ENCODE measurements at regions of chr19 and their contacts with region 1.

Region 1: DNA sequence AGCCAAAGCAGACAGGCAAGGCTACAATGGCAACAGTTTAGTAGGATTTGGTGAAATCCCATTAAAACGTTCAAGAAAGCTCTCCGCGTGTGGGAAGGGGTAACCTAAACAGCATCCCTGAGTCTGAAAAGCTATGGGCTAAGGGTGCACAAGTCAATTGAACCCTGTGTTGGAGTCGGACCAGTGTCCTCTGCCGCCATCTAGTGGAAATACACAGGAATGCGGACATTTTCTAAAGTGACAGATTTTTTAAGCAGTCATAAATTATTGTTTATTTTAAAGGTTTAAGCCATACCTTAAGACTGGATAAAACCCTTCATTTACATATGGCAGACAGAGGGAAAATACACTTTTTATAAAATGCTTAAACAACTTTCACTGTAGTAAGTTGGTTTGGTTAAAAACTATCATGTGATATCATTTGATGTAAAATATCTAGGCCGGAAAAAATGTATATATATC is 26.5 kb upstream of the LSM14A start:
- DNase-seq: peak; percentile 69
- ATAC-seq: peak; percentile 74
- H3K4me3 Mint-ChIP-seq: no peak overlapping the region
- H3K27ac Mint-ChIP-seq: no peak overlapping the region
- H3K4me1 Mint-ChIP-seq: no peaks in the 10 kb centered on the region
- H3K27me3 Mint-ChIP-seq: no peaks in the 10 kb centered on the region

Region 2: DNA sequence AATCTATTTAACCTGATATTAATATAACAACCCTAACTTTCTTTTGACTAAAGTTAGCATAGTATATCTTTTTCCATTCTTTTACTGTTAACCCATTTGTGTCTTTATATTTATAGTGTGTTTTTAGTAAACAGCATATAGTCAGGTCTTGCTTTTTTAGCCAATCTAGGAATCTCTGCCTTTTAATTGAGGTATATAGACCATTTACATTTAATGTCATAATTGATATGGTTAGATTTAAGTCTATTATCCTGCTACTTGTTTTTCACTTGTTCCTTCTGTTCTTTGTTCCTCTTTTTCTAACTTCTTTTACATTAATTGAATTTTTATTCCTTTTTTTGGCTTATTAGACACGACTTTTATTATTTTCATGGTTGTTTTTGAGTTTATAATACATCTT is 174.7 kb before region 1 on chr19:
- CTCF ChIA-PET with region 1: no interaction called
- DNase-seq: no peak
- ATAC-seq: no peak
- H3K4me3 Mint-ChIP-seq: no peak overlapping the region
- H3K27ac Mint-ChIP-seq: no peak overlapping the region
- H3K4me1 Mint-ChIP-seq: no peaks in the 10 kb centered on the region
- H3K27me3 Mint-ChIP-seq: no peaks in the 10 kb centered on the region

Region 3: DNA sequence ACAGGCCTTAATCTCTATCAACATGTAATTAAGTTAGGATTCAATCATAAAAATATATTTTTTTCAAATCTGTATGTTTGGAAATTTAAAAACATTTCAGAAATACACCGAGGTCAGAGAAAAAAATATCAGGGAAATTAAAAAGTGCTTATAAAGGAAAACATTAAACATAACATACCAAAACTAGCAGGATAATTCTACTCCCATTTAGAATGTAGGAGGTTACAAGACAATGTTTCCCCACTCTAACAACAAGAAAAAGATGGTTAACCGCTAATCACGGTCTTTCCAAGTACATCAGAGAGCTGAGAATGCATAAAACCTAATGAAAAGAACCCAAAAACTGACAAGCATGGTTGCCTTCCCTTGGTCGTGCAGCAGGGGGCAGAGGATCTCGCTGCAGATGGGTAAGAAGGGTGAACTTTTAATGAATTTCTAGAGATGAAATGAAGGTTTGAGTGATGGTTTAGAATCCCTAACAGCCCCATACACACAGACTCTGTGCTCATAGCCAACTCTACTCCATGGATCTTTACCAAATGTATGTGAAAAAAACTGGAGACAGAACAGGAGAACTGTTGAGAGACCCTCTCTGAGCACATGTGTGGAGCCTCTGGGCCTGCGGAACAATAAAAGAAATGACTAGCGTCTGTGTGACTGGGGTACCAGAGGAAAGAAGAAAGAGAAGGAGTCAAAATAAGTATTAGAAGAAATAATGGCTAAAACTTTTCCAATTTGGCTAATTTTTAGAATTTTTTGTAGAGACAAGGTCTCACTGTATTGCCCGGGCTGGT is 24.7 kb before region 1 on chr19:
- CTCF ChIA-PET with region 1: interaction called, 28 read pairs
- DNase-seq: peak; percentile 70
- ATAC-seq: peak; percentile 63
- H3K4me3 Mint-ChIP-seq: no peak overlapping the region
- H3K27ac Mint-ChIP-seq: no peak overlapping the region
- H3K4me1 Mint-ChIP-seq: peaks cover 6% of the 10 kb centered on the region
- H3K27me3 Mint-ChIP-seq: peaks cover 13% of the 10 kb centered on the region

Region 4: GRCh38 chr19:34317311-34317927 is 171.6 kb after region 1 on chr19:
- CTCF ChIA-PET with region 1: no interaction called
- DNase-seq: no peak
- ATAC-seq: peak; percentile 27
- H3K4me3 Mint-ChIP-seq: no peak overlapping the region
- H3K27ac Mint-ChIP-seq: no peak overlapping the region
- H3K4me1 Mint-ChIP-seq: peaks cover 10% of the 10 kb centered on the region
- H3K27me3 Mint-ChIP-seq: no peaks in the 10 kb centered on the region